ENCODE measurements at regions of chr11 and their contacts with region 1.

Region 1: GRCh38 chr11:102346748-102347461 is at the start of gene BIRC2:
- DNase-seq: peak; percentile 95 to 98 (median 96)
- ATAC-seq: peak; percentile 91 to 98 (median 98)
- H3K4me3 ChIP-seq: peak within 1 kb of the TSS; percentile 56 to 94 (median 87)
- H3K27ac ChIP-seq: peak within 1 kb of the TSS; percentile 95 to 100 (median 98)
- H3K4me1 ChIP-seq: peaks cover 0 to 38% (median 30%) of the 10 kb centered on the region in 12 donors
- H3K27me3 ChIP-seq: no peaks in the 10 kb centered on the region
- CTCF ChIP-seq: peak; percentile 64 to 88 (median 76)
- POLR2A ChIP-seq: peak; percentile 54 to 79
- total RNA-seq, gene BIRC2: 24.1 to 39.9 (median 32.7) TPM

Region 2: GRCh38 chr11:102287964-102288724 is 58.8 kb before region 1 on chr11:
- intact Hi-C with region 1: loop called in 7 of 10 experiments (anchors 2 to 10 kb)
- DNase-seq: peak in 3 of 5 donors; percentile 23 to 31 (median 28)
- ATAC-seq: peak; percentile 78 to 92 (median 82)
- H3K4me3 ChIP-seq: peak overlapping the region in 8 of 12 donors; percentile 10 to 42 (median 28)
- H3K27ac ChIP-seq: no peak overlapping the region
- H3K4me1 ChIP-seq: peaks cover 0 to 23% (median 0%) of the 10 kb centered on the region in 12 donors
- H3K27me3 ChIP-seq: no peaks in the 10 kb centered on the region
- CTCF ChIP-seq: peak; percentile 66 to 84 (median 76)
- POLR2A ChIP-seq: no peak

Region 3: DNA sequence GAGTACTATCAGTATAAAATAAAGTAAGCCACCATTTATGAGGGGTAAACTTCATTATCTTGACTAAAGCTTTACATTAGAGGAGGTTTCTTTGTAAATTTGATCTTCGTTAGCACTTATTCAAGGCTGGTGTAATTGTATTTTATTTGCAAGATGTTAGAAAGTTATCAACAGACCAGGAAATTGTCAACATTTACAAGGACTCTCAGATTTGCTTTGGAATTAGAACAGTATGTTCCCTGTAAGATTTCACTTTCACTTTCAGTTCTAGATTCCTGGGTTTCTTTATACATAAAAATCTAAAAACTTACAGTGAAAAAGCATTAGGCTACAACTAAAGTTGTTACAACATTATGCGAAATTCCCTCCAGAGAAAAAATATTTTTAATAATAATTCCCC is 34.2 kb before region 1 on chr11:
- intact Hi-C with region 1: loop called in 1 of 10 experiments (anchors 1 kb)
- DNase-seq: no peak
- ATAC-seq: no peak
- H3K4me3 ChIP-seq: peak overlapping the region in 9 of 12 donors; percentile 22 to 51 (median 35)
- H3K27ac ChIP-seq: peak overlapping the region; percentile 18 to 89 (median 66)
- H3K4me1 ChIP-seq: peaks cover 0 to 42% (median 3%) of the 10 kb centered on the region in 12 donors
- H3K27me3 ChIP-seq: no peaks in the 10 kb centered on the region
- CTCF ChIP-seq: no peak
- POLR2A ChIP-seq: no peak

Region 4: DNA sequence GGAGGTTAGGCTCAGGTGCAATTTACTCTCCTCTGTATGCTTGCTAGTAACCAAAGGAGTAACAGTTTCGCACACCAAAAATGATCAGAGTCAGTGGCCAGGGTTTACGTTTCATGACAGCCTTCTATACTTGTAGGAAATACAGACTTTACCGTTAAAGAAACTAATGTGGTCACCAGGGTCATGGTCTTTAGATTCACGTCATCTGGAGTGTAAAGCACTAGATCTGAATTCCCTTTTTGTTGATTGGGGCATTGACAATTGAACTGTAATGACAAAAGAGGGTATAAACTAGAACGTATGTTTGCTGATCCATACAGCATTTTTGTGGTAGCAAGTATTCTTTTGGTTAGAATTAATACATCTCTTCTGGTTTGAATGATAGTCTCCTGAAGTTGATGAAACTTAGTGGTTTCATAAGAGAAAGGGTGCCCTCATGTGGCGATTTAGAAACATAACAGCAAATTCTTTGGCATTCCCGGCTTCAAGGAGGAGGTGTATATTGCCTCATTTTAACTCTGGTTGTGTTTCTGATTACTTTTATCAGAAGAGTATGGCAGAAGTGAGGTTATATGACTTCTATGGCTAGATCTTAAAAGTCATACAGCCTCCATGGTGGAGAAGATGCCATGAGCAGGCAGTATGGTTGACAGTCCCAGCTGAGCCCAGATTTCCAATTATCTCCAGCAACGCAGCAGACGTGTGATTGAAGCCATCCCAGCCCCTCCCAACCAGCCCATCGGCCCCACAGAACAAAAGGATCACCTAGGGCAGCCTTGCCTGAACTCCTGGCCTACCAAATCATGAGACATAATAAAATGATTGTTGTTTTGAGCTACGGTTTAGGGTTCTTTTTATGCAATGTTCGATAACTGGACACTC is 148.5 kb after region 1 on chr11:
- intact Hi-C with region 1: loop called in 7 of 10 experiments (anchors 1 to 5 kb)
- DNase-seq: peak in 2 of 5 donors; percentile 39 to 48
- ATAC-seq: peak in 3 of 4 donors; percentile 71 to 83 (median 76)
- H3K4me3 ChIP-seq: no peak overlapping the region
- H3K27ac ChIP-seq: no peak overlapping the region
- H3K4me1 ChIP-seq: no peaks in the 10 kb centered on the region
- H3K27me3 ChIP-seq: peaks cover 0 to 20% (median 0%) of the 10 kb centered on the region in 9 donors
- CTCF ChIP-seq: peak; percentile 62 to 81 (median 72)
- POLR2A ChIP-seq: no peak

Measured in heart left ventricle (tissue), 16 donors.